ENCODE measurements at regions of chr2 and their contacts with region 1.

Region 1: DNA sequence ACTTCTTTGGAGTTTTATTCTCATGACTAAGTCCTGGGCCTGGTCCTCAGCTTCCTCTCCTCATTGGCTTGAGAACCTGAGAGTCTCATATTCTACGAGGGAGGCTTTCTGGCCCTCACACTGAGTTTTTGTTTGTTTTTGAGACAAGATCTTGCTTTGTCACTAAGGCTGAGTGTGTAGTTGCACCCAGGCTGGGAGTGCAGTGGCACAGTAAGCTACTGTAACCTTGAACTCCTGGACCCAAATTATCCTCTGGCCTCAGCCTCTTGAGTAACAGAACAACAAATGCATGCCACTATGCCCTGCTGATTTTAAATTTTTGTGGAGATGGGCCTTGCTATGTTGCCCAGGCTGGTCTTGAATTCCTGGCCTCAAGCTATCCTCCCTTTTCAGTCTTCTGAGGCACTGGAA is 22.6 kb downstream of the PRKRA start:
- DNase-seq: peak in 2 of 4 experiments; percentile 63 to 74
- ATAC-seq: peak; percentile 90
- H3K4me3 ChIP-seq: no peak overlapping the region
- H3K27ac ChIP-seq: peak overlapping the region; percentile 69
- H3K4me1 ChIP-seq: peaks cover 18 to 23% of the 10 kb centered on the region in 2 experiments
- H3K27me3 ChIP-seq: no peaks in the 10 kb centered on the region
- CTCF ChIP-seq: no peak
- EP300 ChIP-seq: no peak
- POLR2A ChIP-seq: no peak
- RAD21 ChIP-seq: no peak

Region 2: GRCh38 chr2:178450774-178451525 is 22.5 kb after region 1 on chr2 and contains the starts of genes PJVK and PRKRA:
- CTCF ChIA-PET with region 1: no interaction called
- POLR2A ChIA-PET with region 1: interaction called, 17 read pairs
- in situ Hi-C with region 1: no loop called
- intact Hi-C with region 1: no loop called
- DNase-seq: peak; percentile 98 to 99 (median 99)
- ATAC-seq: peak; percentile 97
- H3K4me3 ChIP-seq: peak within 1 kb of the TSS; percentile 90
- H3K27ac ChIP-seq: peak within 1 kb of the TSS; percentile 96
- H3K4me1 ChIP-seq: peaks cover 14 to 19% of the 10 kb centered on the region in 2 experiments; a peak in 4 of 5 replicates
- H3K27me3 ChIP-seq: no peaks in the 10 kb centered on the region
- CTCF ChIP-seq: peak in 2 of 3 experiments; percentile 9 to 14; a peak in 1 of 6 replicates
- EP300 ChIP-seq: peak; percentile 11; the same call in 1 of the 2 replicates
- POLR2A ChIP-seq: peak; percentile 99
- RAD21 ChIP-seq: no peak
- polyA plus RNA-seq, gene PJVK: 0.11 to 0.24 TPM
- polyA plus RNA-seq, gene PRKRA: 14.1 to 20.4 TPM